Thyroid gland (tissue), 4 donors: ENCODE measurements at regions of chr12 and their contacts with region 1.

Region 1: DNA sequence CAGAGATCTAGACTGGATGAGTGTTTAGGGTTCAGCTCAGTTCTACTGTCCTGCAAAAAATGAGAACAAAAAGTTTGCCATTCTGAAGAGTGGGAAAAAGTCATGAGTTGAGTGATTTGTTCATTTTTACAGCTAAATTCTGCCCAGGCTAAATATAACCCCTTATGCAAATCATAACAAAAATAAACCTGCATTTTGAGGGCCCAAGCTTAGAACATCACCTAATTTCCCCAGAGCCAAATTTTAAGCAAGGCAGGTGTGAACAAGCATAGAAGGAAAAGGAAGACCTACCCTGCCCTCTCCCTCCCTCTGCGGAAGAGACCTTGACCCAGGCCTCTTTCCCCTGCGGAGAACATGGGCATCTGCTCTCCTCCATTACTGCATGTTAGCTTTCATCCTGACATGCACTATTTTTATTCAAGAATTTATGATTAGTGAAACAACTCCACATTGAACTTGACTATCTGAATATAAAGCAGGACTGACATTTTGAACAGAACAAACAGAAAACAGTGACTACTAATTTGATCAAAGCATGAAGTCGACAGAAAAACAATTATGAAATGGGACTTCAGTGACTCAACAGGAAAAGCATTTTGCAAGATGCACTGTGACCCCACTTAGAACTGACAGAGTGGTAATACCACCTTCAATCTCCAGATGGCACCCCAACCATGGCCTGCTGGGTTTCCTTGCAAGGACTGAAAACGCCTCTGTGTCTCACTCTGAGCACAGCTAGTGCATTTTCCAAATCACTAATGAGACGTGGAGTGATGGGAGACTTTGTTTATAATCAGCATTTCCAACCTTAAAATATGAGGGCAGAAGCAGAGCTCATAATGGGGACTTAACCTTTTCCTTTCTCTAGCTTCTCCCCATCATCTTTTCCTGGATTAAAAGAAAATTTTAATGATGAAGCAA is 30.9 kb upstream of the SELPLG start:
- DNase-seq: peak; percentile 81 to 84
- H3K4me3 ChIP-seq: no peak overlapping the region
- H3K27ac ChIP-seq: peak overlapping the region; percentile 65 to 84 (median 80)
- H3K4me1 ChIP-seq: peaks cover 0 to 14% of the 10 kb centered on the region in 2 donors
- H3K27me3 ChIP-seq: no peaks in the 10 kb centered on the region
- CTCF ChIP-seq: peak; percentile 77 to 99 (median 94)
- POLR2A ChIP-seq: no peak

Region 2: GRCh38 chr12:108731105-108731865 is 66.7 kb after region 1 on chr12 and contains the start of gene CORO1C:
- intact Hi-C with region 1: loop called (anchors 10 kb)
- DNase-seq: peak; percentile 95 to 96
- H3K4me3 ChIP-seq: peak within 1 kb of the TSS; percentile 61 to 75 (median 67)
- H3K27ac ChIP-seq: peak within 1 kb of the TSS; percentile 86 to 93 (median 88)
- H3K4me1 ChIP-seq: peaks cover 0 to 5% of the 10 kb centered on the region in 2 donors
- H3K27me3 ChIP-seq: no peaks in the 10 kb centered on the region
- CTCF ChIP-seq: peak; percentile 41 to 86 (median 75)
- POLR2A ChIP-seq: peak; percentile 84 to 91
- total RNA-seq, gene CORO1C: 22.0 to 63.6 (median 30.1) TPM